ENCODE measurements at regions of chr15 and their contacts with region 1.

Region 1: DNA sequence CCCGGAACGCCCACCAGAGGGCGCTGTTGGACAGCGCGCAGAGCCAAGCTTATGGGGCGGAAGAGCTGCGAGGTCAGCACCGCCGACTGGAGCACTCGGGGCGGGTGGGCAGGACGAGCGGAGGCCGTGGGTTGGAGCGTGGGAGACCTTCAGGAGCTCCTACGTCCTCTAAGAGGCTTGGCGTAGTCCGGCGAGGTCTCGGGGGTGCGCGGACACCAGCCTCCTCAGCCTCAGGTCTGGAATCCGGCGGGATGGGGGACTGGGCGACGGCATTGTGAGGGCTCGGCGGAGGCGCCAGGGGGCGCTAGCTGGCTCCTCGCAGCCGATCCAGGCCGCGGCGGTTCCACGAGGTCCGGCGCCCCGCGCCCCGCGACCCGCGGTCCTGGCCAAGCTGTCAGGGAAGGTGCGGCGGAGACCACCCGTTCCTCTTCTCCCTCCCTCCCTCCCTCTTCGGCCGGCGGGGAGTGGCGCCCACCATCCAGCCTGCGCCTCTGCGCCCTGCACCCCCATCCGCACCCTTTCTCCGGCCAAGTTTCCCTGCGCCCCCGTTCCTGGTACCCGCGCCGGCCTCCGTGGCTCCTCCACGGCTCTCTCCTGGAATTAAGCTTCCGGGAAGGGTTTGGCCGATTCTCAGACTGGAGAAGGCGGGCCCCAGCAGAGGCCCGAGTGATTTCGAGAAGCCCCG is 24.3 kb upstream of the POLG start:
- DNase-seq: peak; percentile 88
- H3K4me3 ChIP-seq: peak overlapping the region in 2 of 3 experiments; percentile 37 to 39
- H3K27ac ChIP-seq: no peak overlapping the region
- H3K4me1 ChIP-seq: no peaks in the 10 kb centered on the region
- H3K27me3 ChIP-seq: peaks cover 53 to 65% of the 10 kb centered on the region in 2 experiments
- CTCF ChIP-seq: peak; percentile 76 to 88
- POLR2A ChIP-seq: no peak

Region 2: GRCh38 chr15:87489902-87490665 is 1868.8 kb before region 1 on chr15:
- CTCF ChIA-PET with region 1: no interaction called
- POLR2A ChIA-PET with region 1: no interaction called
- dilution Hi-C with region 1: no loop called
- intact Hi-C with region 1: no loop called
- DNase-seq: no peak
- H3K4me3 ChIP-seq: no peak overlapping the region
- H3K27ac ChIP-seq: no peak overlapping the region
- H3K4me1 ChIP-seq: no peaks in the 10 kb centered on the region
- H3K27me3 ChIP-seq: no peaks in the 10 kb centered on the region
- CTCF ChIP-seq: no peak
- POLR2A ChIP-seq: no peak

Region 3: DNA sequence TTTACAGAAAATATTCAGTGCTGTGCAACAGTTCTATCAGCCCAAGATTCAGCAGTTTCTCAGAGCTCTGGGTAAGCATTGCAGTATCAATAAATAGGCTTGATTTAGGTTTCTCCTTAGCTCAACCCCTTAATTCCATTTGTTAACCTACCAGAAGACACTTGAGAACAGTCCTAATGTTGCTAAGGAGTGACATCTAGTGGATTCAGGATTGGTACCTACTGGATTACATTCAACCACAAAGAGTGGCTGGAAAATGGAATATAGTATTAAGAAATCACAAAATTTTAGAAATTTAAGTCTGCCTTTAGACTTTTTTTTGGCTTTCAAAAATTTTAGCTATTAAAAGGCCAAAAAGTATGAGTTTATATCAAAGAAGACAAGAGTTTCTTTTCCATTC is 59.0 kb before region 1 on chr15:
- CTCF ChIA-PET with region 1: no interaction called
- POLR2A ChIA-PET with region 1: no interaction called
- dilution Hi-C with region 1: no loop called
- intact Hi-C with region 1: no loop called
- DNase-seq: peak; percentile 25
- H3K4me3 ChIP-seq: no peak overlapping the region
- H3K27ac ChIP-seq: no peak overlapping the region
- H3K4me1 ChIP-seq: no peaks in the 10 kb centered on the region
- H3K27me3 ChIP-seq: no peaks in the 10 kb centered on the region
- CTCF ChIP-seq: peak in 1 of 2 donors; percentile 9
- POLR2A ChIP-seq: no peak

Region 4: DNA sequence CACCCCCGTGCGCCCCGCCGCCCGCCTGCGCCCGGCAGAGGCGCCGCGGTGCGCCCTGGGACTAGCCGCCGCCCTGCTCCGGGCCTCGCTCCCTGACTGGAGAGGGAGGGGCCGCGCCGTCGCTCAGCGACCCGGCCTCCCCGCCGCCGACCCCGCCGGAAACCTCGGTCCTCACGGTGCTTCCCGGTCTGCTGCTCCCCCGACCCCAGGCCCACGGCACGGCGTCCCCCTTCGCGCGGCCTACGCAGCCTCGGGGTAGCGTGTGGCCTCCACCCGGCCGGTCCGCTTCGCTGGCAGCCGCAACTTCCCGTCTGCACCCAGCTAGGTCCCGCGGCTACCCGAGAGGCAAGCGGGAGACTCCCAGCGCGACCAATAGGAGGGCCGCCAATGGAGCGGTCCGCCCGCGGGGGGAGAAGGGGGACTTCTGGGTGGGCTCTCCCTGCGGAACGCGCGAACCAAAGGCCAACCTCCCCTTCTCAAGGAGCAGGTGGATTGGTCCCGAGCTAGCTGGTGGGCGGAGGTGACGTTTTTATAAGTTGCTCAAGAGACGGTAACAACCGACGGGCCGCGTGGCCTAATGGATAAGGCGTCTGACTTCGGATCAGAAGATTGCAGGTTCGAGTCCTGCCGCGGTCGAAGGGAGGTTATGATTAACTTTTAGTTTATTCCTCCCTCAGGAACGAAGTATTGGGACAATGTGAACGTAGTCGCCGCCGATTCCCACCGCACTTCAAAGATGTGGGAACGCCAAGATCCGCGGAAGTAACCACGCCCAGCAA is 24.2 kb before region 1 on chr15 and contains the start of gene POLG:
- CTCF ChIA-PET with region 1: interaction called, 43 read pairs
- POLR2A ChIA-PET with region 1: no interaction called
- dilution Hi-C with region 1: no loop called
- intact Hi-C with region 1: loop called (anchors 2 kb)
- DNase-seq: peak; percentile 99
- H3K4me3 ChIP-seq: peak within 1 kb of the TSS; percentile 40 to 91 (median 71)
- H3K27ac ChIP-seq: peak within 1 kb of the TSS; percentile 11
- H3K4me1 ChIP-seq: peaks cover 28% of the 10 kb centered on the region
- H3K27me3 ChIP-seq: peaks cover 0 to 6% of the 10 kb centered on the region in 2 experiments
- CTCF ChIP-seq: no peak
- POLR2A ChIP-seq: peak; percentile 96
- total RNA-seq, gene POLG: 77.7 and 79.4 TPM in 2 replicates

Region 5: DNA sequence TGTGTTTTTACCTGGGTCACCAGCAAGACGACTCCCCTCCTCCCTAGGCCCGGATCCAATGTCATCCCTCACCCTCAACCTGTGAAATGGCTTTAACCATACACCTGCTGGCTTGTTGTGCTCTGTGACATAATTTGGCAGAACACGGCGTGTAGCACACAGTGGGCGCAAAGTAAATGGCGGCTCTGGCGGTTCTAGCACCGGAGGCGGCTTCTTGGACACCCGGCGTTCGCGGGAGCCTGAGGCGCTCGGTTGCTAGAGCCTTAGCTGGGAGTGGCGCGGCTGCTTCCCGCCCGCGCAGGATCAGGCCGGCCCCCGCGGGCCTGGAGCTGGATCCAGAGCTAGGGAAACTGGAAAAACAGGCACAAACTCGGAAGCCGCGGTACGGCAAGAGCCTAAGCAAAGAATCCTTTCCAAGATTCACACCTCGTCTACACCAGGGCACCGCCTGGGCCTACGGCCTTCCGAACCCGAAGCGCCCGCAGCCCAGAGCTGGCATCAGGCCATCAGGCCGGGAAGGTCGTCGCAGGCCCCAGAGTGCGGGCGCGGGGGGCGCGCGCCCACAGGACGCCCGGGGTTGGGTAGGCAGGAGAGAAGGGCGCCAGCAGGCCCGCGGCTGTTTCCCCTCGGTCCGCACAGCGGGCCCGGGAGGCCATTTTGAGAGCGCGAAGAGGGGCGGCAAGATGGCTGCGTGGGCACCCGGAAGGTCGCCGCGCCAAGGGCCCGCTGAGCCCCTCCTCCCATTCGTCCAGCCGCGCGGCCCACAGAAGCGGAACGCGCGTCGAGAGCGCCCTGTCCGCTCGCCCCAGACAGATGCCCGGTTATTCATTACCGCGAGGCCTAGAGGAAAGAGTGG is 19.6 kb after region 1 on chr15:
- CTCF ChIA-PET with region 1: interaction called, 70 read pairs
- POLR2A ChIA-PET with region 1: no interaction called
- dilution Hi-C with region 1: no loop called
- intact Hi-C with region 1: no loop called
- DNase-seq: no peak
- H3K4me3 ChIP-seq: peak overlapping the region in 1 of 3 experiments; percentile 6
- H3K27ac ChIP-seq: no peak overlapping the region
- H3K4me1 ChIP-seq: peaks cover 4% of the 10 kb centered on the region
- H3K27me3 ChIP-seq: peaks cover 92 to 95% of the 10 kb centered on the region in 2 experiments
- CTCF ChIP-seq: no peak
- POLR2A ChIP-seq: no peak

Region 6: DNA sequence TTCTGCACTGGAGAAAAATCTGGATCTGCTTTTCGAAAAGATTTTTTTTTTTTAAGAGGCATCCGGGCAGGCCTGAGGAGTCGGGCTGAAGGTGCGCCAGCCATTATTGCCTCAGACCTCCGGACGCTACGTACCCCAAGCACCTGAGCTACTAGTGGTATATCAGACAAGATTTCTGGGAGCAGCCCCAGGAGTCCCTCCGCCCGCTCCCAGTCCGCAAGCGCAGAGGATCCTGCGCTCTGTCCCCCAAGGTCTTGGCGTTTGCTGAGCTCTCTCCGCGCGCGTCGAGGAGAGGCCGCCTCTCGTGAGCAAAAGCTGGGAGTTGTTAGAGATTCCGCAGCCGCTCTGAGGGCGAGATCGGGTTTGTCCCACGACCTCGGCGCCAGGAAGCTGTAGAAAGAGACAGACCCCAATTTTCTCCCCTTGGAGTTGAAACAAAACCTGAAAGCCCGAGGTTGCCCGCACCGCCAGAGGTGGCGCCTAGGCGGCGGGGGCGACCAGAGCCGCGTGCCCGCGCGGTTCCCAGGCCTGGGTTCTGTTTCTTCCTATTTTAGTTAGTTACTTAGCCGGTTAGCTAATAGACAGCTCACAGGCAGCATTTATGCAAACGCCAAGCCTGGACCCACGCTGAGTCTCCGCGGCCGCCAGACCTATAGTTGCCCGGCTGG is 48.2 kb after region 1 on chr15:
- CTCF ChIA-PET with region 1: interaction called, 13 read pairs
- POLR2A ChIA-PET with region 1: interaction called, 4 read pairs
- dilution Hi-C with region 1: no loop called
- intact Hi-C with region 1: no loop called
- DNase-seq: no peak
- H3K4me3 ChIP-seq: no peak overlapping the region
- H3K27ac ChIP-seq: no peak overlapping the region
- H3K4me1 ChIP-seq: no peaks in the 10 kb centered on the region
- H3K27me3 ChIP-seq: peaks cover 96 to 100% of the 10 kb centered on the region in 2 experiments
- CTCF ChIP-seq: peak in 1 of 2 donors; percentile 8
- POLR2A ChIP-seq: no peak

Region 7: GRCh38 chr15:89442671-89443307 is 83.9 kb after region 1 on chr15:
- CTCF ChIA-PET with region 1: interaction called, 68 read pairs
- POLR2A ChIA-PET with region 1: no interaction called
- dilution Hi-C with region 1: no loop called
- intact Hi-C with region 1: no loop called
- DNase-seq: no peak
- H3K4me3 ChIP-seq: no peak overlapping the region
- H3K27ac ChIP-seq: no peak overlapping the region
- H3K4me1 ChIP-seq: no peaks in the 10 kb centered on the region
- H3K27me3 ChIP-seq: peaks cover 3 to 6% of the 10 kb centered on the region in 2 experiments
- CTCF ChIP-seq: peak; percentile 64 to 66
- POLR2A ChIP-seq: no peak

Region 8: GRCh38 chr15:89556413-89557262 is 197.7 kb after region 1 on chr15:
- CTCF ChIA-PET with region 1: interaction called, 17 read pairs
- POLR2A ChIA-PET with region 1: no interaction called
- dilution Hi-C with region 1: no loop called
- intact Hi-C with region 1: loop called (anchors 5 kb)
- DNase-seq: peak; percentile 82
- H3K4me3 ChIP-seq: no peak overlapping the region
- H3K27ac ChIP-seq: no peak overlapping the region
- H3K4me1 ChIP-seq: no peaks in the 10 kb centered on the region
- H3K27me3 ChIP-seq: peaks cover 4 to 14% of the 10 kb centered on the region in 2 experiments
- CTCF ChIP-seq: peak; percentile 61 to 71
- POLR2A ChIP-seq: no peak

Region 9: GRCh38 chr15:89776274-89777072 is 417.6 kb after region 1 on chr15 and contains the start of gene MESP2:
- CTCF ChIA-PET with region 1: no interaction called
- POLR2A ChIA-PET with region 1: no interaction called
- dilution Hi-C with region 1: no loop called
- intact Hi-C with region 1: no loop called
- DNase-seq: peak; percentile 88
- H3K4me3 ChIP-seq: peak within 1 kb of the TSS in 2 of 3 experiments; percentile 4 to 30
- H3K27ac ChIP-seq: no peak within 1 kb of the TSS
- H3K4me1 ChIP-seq: peaks cover 6% of the 10 kb centered on the region
- H3K27me3 ChIP-seq: no peaks in the 10 kb centered on the region
- CTCF ChIP-seq: peak; percentile 55 to 73
- POLR2A ChIP-seq: no peak
- total RNA-seq, gene MESP2: 0.42 TPM in 1 of 2 replicates, not detected in the other